Tibial artery (tissue), 4 donors: ENCODE measurements at regions of chr3 and their contacts with region 1.

Region 1: DNA sequence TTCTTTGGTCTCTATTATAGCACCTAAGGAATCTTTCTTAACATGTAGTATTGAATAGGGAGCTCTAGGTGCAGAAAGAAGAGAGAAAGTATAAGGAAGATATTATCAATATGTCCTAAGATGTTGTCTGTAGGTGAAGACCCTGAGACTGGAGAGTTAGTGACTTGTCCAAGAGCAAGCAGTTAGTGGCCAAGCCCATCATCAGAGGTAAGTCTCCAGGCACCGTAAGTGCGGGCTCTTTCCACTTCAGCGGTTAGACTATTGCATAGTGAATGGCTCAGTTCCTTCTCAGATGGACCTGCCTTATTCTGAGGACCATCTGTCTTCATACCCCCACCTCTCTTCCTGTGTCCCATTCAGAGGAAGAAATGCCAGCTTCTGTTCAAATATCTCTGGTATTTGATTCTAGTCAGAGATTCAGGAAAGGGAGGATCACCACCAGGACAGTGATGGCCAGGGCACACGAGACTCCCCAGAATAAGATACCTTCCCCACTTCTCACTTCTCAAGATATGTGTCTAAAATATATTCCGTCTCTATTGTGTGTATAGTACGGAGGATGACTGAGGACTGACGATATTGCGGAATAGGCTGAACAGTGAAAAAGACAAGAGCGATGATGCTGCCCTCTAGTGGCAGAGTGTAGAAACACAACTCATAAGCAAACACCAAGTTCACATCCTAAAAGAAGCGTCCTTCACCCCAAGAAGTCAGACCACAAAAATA is 19.1 kb upstream of the ADGRG7 start:
- DNase-seq: peak in 1 of 2 donors; percentile 49
- H3K4me3 ChIP-seq: no peak overlapping the region
- H3K27ac ChIP-seq: no peak overlapping the region
- H3K4me1 ChIP-seq: peaks cover 0 to 4% (median 0%) of the 10 kb centered on the region in 4 donors
- H3K27me3 ChIP-seq: no peaks in the 10 kb centered on the region
- CTCF ChIP-seq: peak; percentile 86 to 90

Region 2: GRCh38 chr3:99836681-99837080 is 753.6 kb before region 1 on chr3:
- intact Hi-C with region 1: loop called (anchors 5 kb)
- DNase-seq: no peak
- H3K4me3 ChIP-seq: no peak overlapping the region
- H3K27ac ChIP-seq: no peak overlapping the region
- H3K4me1 ChIP-seq: peaks cover 0 to 20% (median 0%) of the 10 kb centered on the region in 4 donors
- H3K27me3 ChIP-seq: no peaks in the 10 kb centered on the region
- CTCF ChIP-seq: no peak

Region 3: DNA sequence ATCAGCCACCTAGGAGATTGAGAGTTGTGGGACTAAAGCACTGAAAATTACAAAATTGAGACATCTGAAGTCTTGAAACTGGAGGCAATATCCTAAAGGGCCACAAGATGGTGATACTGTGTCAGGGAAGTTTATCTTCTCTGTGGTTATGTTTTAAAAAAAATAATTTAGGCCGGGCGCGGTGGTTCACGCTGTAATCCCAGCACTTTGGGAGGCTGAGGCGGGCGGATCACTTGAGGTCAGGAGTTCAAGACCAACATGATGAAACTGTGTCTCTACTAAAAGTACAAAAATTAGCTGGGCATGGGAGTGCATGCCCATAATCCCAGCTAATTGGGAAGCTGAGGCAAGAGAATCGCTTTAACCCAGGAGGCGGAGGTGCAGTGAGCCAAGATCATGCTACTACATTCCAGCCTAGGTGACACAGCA is 273.6 kb before region 1 on chr3:
- intact Hi-C with region 1: loop called (anchors 10 kb)
- DNase-seq: peak in 1 of 2 donors; percentile 31
- H3K4me3 ChIP-seq: no peak overlapping the region
- H3K27ac ChIP-seq: peak overlapping the region in 1 of 2 donors; percentile 24
- H3K4me1 ChIP-seq: peaks cover 0 to 8% (median 2%) of the 10 kb centered on the region in 4 donors
- H3K27me3 ChIP-seq: no peaks in the 10 kb centered on the region
- CTCF ChIP-seq: peak; percentile 70 to 75

Region 4: GRCh38 chr3:100463002-100463401 is 127.3 kb before region 1 on chr3:
- intact Hi-C with region 1: loop called (anchors 5 kb)
- DNase-seq: no peak
- H3K4me3 ChIP-seq: no peak overlapping the region
- H3K27ac ChIP-seq: no peak overlapping the region
- H3K4me1 ChIP-seq: no peaks in the 10 kb centered on the region
- H3K27me3 ChIP-seq: no peaks in the 10 kb centered on the region
- CTCF ChIP-seq: peak; percentile 60 to 80

Region 5: DNA sequence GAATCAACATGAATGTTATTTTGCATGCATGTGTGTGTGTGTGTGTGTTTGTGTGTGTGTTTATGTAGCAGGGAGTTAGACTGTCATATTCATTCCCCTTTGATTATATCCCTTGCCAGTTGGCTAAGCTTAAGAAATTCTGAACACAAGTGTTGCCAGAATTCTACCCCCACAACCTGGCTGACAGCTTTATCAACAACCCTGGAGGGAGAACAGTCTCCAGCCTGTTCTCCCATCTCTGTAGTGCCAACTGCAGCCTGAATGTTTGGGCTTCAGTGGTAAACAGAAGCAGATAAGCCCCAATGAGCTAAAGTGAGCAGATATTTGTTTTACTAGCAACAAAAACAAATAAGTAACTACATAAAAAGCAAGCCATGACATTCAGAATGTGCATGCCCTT is 565.5 kb after region 1 on chr3:
- intact Hi-C with region 1: no loop called
- DNase-seq: no peak
- H3K4me3 ChIP-seq: no peak overlapping the region
- H3K27ac ChIP-seq: no peak overlapping the region
- H3K4me1 ChIP-seq: peaks cover 0 to 47% (median 11%) of the 10 kb centered on the region in 4 donors
- H3K27me3 ChIP-seq: no peaks in the 10 kb centered on the region
- CTCF ChIP-seq: no peak